Cardiac septum (tissue), 1 donor: ENCODE measurements at regions of chr2 and their contacts with region 1.

Region 1: DNA sequence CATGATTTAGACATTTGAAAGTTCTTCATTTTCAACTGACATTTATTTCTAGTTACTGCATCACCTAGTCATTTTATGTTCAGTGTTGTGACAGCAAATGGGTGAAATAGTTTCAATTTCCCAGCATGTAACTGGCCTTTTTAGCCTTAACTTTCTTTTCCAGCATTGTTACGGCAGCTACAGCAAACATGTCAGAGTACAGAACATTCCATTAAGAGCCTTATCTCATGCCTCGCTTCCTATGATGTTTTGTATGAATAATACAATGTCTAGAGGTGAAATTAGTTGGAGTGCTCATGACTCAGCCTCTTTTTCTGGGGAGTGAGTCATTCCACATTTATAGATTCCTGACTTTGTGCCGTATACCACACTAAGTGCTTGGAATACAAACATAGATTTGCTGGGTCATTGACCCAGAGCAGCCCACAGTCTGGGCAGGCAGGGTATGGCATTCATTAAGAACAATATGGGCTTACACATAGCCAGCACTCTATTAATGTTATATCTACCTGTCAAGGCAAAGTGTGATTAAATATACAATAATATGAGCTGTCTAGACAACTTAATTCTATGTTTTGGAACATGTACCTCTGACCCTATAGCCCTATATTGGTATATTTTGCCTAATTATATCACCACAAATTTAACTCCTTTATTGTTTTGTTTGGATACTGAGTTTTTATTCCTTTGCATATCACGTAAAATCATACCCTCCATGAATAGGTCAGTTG is 72.2 kb downstream of the MAP2 start:
- DNase-seq: no peak

Region 2: DNA sequence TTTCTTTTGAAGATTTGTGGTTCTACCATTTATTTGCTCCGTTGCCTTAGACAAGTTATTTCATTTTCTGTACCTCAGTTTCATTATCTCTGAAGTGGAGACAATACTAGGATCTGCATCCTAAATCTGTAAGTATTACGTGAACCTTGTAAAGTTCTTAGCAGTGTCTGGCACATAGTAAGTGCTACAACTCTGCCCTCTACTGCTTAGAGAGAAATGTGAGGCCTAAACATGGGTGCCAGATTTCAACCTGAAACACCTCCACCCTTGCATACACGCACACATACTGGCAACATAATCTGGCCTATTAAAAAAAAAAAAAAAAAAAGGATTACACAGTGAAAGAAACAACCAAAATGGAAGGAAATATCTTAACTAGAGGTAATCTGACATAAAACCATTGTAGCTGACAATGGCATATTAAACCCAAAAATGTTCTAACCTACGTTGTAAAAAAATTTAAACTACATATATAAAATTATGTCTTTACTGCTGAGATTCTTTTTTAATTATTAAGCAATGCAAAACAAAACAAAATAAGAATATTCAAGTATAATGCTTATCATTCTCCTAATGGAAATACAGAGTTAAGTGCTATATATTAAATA is 60.4 kb after region 1 on chr2:
- intact Hi-C with region 1: loop called (anchors 10 kb)
- DNase-seq: no peak